K562 (cell line): ENCODE measurements at regions of chr3 and their contacts with region 1.

Region 1: DNA sequence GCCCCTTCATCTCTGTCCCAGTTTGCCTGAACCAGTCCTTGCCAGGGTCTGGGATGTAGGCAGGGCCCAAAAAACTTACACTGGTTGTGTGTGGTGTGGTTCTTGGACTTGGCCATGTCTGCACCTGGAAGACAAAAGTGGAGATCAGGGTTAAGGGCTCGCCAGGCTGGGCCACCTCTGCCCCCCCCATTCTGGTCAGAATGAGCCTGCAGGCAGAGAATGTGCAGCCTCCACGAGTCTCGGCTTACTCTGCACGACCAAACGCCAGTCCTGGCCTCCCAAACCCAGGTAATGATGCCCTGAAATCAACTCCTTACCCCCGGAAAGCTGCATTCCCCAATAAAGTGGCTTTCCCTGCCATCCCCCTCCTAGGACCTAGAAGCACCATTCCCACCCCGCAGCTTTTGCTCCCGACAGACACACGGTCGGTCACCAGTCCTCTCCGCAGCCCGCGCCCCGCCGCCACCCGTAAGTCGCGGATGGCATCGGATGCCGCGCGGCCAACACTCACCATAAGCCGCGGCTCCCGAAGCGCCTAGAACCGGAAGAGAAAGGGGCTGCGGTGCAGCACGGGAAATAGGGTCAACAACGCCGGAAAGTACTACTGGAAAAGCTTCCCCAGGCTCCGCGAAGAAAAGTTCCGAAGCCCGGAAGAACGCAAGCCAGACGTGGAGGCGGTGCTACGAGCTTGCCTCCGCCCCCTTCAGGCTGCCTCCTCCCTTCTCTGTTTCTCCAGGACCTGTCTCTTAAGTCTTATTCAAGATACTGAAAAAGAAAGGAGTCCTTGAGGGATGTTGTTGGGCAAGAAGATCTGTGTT is at the start of gene RPL29:
- DNase-seq: peak; percentile 78 to 93 (median 82)
- ATAC-seq: peak; percentile 81
- H3K4me3 ChIP-seq: peak within 1 kb of the TSS; percentile 67
- H3K27ac ChIP-seq: peak within 1 kb of the TSS; percentile 80
- H3K4me1 ChIP-seq: peaks cover 36 to 42% of the 10 kb centered on the region in 2 experiments
- H3K27me3 ChIP-seq: no peaks in the 10 kb centered on the region
- CTCF ChIP-seq: no peak
- EP300 ChIP-seq: peak; percentile 55
- POLR2A ChIP-seq: peak; percentile 98
- RAD21 ChIP-seq: no peak
- polyA plus RNA-seq, gene RPL29: 568 to 871 TPM

Region 2: DNA sequence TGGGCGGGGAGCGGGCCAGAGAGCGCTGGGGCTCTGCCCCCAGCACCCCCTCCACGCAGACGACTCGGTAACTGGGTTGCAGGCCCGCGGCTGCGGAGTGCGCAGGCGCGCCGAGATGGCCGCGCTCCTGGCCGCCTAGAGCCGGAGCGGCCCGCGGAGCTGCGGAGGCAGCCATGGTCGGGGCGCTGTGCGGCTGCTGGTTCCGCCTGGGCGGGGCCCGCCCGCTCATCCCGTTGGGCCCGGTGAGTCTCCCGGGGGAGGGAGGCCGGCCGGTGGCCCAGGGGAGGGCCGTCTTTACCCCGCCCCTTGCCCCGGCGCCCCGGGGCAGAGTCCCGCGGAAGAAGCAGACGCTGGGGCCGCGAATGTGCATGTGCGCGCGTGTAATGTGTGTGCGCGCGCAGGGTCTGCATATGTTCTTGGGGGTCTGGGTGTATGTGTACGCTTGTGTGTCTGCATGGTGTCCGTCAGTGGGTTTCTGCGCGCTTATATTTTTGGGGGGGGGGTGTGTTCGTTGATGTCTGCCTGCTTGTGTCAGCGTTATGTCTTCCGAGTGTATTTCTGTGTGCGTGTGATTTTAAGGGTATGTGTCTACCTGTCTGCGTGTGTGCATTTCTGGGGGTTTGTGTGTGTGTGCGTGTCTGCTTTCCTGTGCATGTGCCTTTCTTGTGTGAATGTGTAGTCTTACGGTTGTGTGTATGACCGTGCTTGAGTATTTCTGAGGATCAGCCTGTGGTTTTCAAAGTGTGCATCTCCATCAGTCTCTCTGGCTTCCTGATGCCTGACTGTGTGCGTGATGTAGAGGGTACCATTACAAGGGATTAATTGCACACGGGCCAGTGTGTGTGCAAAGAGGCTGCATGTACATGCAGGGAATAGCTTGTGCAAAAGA is 20.3 kb before region 1 on chr3 and contains the start of gene ABHD14A:
- CTCF ChIA-PET with region 1: no interaction called
- POLR2A ChIA-PET with region 1: interaction called, 19 read pairs
- in situ Hi-C with region 1: no loop called
- intact Hi-C with region 1: no loop called
- DNase-seq: peak; percentile 75 to 79 (median 76)
- ATAC-seq: peak; percentile 85
- H3K4me3 ChIP-seq: peak within 1 kb of the TSS; percentile 62
- H3K27ac ChIP-seq: peak within 1 kb of the TSS; percentile 98
- H3K4me1 ChIP-seq: peaks cover 24 to 55% of the 10 kb centered on the region in 2 experiments
- H3K27me3 ChIP-seq: no peaks in the 10 kb centered on the region
- CTCF ChIP-seq: no peak
- EP300 ChIP-seq: 0 out of 2 replicates have a peak, but pooled peaks have one; percentile 3
- POLR2A ChIP-seq: peak; percentile 70
- RAD21 ChIP-seq: no peak
- polyA plus RNA-seq, gene ABHD14A: 0.90 to 2.0 TPM

Region 3: DNA sequence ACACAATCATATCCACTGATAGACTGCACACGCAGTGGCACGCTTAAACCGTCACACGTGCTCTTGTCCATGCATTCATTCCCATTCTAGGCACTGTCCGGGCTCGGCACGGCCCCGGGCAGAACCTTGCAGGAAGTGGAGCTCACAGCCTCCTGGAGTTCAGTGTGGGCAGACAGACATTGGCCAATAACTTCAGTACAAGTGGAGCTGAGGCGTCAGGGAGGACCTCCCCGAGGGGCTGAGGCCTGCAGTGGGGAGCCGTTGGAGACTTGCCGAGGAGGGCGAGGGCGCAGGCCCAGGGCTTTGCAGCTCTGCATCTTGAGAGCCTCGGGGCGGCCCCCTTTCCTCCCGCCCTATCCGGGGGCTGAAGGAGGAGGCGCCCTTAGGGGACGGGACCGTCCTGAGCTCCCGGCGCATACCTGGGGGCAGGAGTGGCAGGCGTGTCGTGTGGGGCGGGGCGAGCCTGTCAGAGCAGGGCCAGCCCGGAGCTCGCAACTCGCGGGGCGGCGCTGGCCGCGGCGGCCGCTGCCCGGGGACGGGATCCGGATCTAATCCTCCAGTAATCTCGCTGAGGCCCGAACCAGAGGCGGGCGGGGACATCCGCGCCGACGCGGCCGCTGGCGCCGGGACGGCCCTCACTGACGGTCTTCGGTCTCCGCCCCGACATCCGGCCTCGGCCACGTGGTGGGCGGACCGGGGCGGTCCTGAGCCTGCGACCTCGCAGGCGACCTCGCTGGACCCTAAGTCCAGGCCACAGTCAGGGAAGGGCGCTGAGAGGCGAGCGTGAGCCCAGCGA is 12.6 kb before region 1 on chr3 and contains the start of gene ACY1:
- CTCF ChIA-PET with region 1: no interaction called
- POLR2A ChIA-PET with region 1: interaction called, 105 read pairs
- in situ Hi-C with region 1: no loop called
- intact Hi-C with region 1: loop called (anchors 1 kb)
- DNase-seq: peak; percentile 79 to 92 (median 88)
- ATAC-seq: peak; percentile 89
- H3K4me3 ChIP-seq: peak within 1 kb of the TSS; percentile 55
- H3K27ac ChIP-seq: peak within 1 kb of the TSS; percentile 91
- H3K4me1 ChIP-seq: peaks cover 35 to 67% of the 10 kb centered on the region in 2 experiments; a peak in 4 of 5 replicates
- H3K27me3 ChIP-seq: no peaks in the 10 kb centered on the region
- CTCF ChIP-seq: no peak; a peak in 1 of 6 replicates
- EP300 ChIP-seq: no peak; the same call in 1 of the 2 replicates
- POLR2A ChIP-seq: no peak
- RAD21 ChIP-seq: no peak
- polyA plus RNA-seq, gene ACY1: 179 to 195 TPM

Region 4: GRCh38 chr3:52649461-52650210 is 654.1 kb after region 1 on chr3:
- CTCF ChIA-PET with region 1: no interaction called
- POLR2A ChIA-PET with region 1: no interaction called
- in situ Hi-C with region 1: no loop called
- intact Hi-C with region 1: no loop called
- DNase-seq: no peak
- ATAC-seq: no peak
- H3K4me3 ChIP-seq: no peak overlapping the region
- H3K27ac ChIP-seq: no peak overlapping the region
- H3K4me1 ChIP-seq: peaks cover 0 to 8% of the 10 kb centered on the region in 2 experiments; a peak in 3 of 5 replicates
- H3K27me3 ChIP-seq: no peaks in the 10 kb centered on the region
- CTCF ChIP-seq: no peak
- EP300 ChIP-seq: no peak
- POLR2A ChIP-seq: no peak
- RAD21 ChIP-seq: no peak